Activated CD4-positive, alpha-beta memory T cell treated with anti-CD3 and anti-CD28 coated beads for 36 hours (primary cell): ENCODE measurements at regions of chr2 and their contacts with region 1.

Region 1: DNA sequence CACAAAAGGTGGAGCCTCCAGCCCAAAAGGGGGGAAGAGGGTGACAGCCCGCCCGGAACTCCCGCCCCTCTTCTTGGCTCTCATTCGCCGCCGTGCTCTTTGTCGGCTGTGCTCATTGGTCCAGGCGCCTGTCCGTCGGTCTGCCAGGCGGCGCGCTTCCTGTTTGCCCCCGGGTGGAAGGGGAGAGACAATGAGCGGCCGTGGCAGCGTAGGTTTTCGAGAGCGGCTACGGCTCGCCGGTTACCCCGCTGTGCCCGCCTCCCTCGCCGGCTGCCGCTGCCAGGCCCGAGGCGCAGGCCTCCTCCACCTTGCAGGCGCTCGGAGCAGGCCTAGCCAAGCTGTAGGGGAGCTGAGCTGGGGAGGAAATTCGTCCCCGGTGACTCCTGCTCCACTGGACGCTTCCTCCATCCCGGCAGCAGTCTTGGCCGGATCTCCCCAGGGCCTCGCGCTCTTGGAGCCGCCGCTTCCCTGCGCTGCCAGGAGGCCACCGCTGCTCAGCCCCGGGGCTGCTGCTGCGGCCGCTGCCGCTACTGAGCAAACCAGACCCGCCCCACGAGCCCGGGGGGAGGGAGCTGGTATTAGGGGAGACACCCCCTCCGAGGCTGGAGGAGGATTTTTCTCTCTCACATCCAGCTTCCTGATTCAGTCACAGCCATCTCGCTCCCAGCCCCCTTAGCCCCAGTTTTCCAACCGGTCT is at the start of gene SP3:
- DNase-seq: peak; percentile 98
- H3K4me3 Mint-ChIP-seq: peak within 1 kb of the TSS; percentile 86
- H3K27ac Mint-ChIP-seq: peak within 1 kb of the TSS; percentile 100
- H3K4me1 Mint-ChIP-seq: peaks cover 26% of the 10 kb centered on the region
- H3K27me3 Mint-ChIP-seq: no peaks in the 10 kb centered on the region
- total RNA-seq, gene SP3: 79.9 to 90.1 TPM

Region 2: GRCh38 chr2:173354601-173355131 is 610.8 kb before region 1 on chr2 and contains the start of gene CDCA7:
- CTCF ChIA-PET with region 1: no interaction called
- POLR2A ChIA-PET with region 1: no interaction called
- intact Hi-C with region 1: loop called (anchors 5 kb)
- DNase-seq: peak; percentile 78
- H3K4me3 Mint-ChIP-seq: peak within 1 kb of the TSS; percentile 84
- H3K27ac Mint-ChIP-seq: peak within 1 kb of the TSS; percentile 93
- H3K4me1 Mint-ChIP-seq: peaks cover 41% of the 10 kb centered on the region
- H3K27me3 Mint-ChIP-seq: peaks cover 47% of the 10 kb centered on the region
- total RNA-seq, gene CDCA7: 59.9 to 64.1 TPM

Region 3: DNA sequence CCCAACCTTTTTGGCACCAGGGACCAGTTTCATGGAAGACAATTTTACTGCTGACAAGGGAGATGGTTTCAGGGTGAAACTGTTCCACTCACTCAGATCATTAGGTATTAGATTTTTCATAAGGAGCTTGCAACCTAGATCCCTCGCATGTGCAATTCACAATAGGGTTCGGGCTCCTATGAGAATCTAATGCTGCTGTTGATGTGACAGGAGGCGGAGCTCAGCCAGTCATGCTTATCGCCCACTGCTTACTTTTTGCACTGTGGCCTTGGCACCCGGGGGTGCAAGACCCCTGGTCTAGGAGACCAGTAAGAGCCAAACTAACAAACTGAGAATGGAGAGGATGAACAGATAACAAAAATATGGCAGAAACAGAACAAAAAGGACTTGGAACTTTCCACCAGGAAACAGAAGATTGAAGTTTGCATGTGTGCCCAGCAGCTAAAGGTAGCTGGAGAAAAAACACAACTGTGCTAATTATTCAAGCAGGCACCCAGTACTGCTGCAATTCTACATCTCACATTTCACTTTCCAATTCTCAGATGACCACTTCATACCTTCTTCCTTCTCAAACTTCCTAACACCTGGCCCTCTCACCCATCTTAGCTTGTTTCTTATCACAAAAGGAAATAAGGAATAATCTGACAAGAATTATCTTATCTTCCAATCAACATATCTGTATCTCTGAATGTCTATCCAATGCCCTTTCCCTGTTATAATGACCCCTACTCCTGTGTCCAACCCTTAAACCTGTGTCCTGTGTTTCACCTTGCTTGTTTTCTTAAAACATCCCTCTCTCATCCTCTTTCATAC is 25.1 kb before region 1 on chr2:
- CTCF ChIA-PET with region 1: interaction called, 4 read pairs
- POLR2A ChIA-PET with region 1: interaction called, 4 read pairs
- intact Hi-C with region 1: loop called (anchors 2 kb)
- DNase-seq: no peak
- H3K4me3 Mint-ChIP-seq: no peak overlapping the region
- H3K27ac Mint-ChIP-seq: peak overlapping the region; percentile 24
- H3K4me1 Mint-ChIP-seq: peaks cover 70% of the 10 kb centered on the region
- H3K27me3 Mint-ChIP-seq: no peaks in the 10 kb centered on the region

Region 4: DNA sequence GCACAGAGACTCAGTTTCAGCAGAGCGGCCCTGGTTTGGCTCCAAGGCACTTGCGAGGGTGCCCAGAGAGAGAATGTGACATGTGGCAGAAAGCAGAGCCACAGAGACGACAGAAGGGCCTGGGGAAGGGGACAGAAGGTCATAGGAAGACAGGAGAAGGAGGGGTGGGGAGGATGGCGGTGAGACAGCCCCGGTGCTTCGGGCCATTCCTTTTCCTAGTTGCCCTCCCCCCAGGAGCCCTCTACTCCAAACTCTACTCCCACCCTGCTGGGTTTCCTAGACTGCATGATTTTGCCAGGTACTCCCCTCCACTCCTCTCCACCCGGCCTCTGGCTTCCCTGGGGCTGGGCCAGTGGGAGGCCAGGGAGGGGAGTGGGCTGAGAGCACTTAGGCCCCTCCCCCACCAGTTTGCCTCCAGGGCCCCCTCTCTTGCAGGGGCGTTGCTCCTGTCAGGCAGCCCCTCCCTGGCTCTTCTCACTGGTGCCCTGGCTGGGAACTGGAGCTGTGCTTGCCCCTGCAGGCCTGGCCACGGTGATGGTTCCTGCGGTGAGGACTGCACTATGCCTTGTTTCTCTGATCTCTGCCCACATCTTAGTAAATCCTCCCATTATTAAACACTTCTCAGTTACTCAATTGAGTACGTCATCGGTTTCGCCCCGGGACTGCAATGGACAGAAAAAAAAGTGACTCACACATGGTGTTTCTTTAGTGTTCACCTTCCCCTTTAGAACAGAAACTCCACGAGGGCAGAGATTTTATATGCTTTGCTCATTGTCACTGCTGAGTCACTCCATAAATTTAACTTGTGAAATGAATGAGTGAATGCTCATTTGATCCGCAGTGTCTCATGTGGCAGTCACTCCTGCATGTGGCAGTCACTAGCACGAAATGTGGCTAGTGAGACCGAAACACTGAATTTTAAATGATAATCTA is 58.4 kb after region 1 on chr2:
- CTCF ChIA-PET with region 1: no interaction called
- POLR2A ChIA-PET with region 1: no interaction called
- intact Hi-C with region 1: loop called (anchors 1 kb)
- DNase-seq: peak; percentile 69
- H3K4me3 Mint-ChIP-seq: no peak overlapping the region
- H3K27ac Mint-ChIP-seq: peak overlapping the region; percentile 5
- H3K4me1 Mint-ChIP-seq: peaks cover 8% of the 10 kb centered on the region
- H3K27me3 Mint-ChIP-seq: peaks cover 5% of the 10 kb centered on the region

Region 5: DNA sequence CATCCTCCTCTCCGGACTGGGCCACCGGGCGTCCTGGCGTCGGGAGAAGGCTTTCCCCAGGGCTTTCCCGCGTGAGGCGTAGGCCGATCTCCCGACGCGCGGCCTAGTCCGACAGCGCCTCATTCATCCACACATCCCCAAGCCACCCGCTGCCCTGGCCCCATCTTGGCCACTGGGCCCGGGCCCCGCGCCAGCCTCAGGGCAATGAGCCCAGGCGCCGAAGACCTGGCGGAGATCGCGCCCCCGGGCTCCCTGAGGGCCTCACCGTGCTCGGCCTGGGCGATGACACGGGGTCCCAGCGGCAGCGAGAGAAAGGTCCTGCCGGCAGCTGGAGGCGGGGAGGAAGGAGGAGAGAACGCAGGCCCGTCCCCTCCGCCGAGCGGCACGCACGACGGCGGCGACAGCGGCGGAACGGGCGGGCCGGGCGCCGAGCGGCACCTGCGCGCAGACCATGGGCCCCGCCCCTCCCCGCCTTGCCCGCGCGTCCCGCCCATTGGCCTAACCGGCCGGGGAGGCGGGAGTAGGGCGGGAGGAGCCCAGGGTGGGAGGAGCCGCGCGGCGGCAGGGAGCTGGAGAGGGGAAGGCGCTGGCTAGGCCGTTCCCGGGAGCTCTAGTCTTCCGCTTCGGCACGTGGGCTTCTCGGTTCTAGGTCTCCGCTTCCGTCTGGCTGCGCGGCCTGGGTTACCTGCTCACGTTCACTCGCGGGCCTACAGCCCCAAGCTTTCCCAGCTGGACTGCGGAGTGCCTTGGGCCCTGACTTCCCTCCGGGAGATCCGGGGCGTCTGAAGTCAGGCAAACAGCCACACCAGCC is 282.9 kb after region 1 on chr2 and contains the start of gene OLA1:
- CTCF ChIA-PET with region 1: no interaction called
- POLR2A ChIA-PET with region 1: interaction called, 3 read pairs
- intact Hi-C with region 1: loop called (anchors 1 kb)
- DNase-seq: peak; percentile 97
- H3K4me3 Mint-ChIP-seq: peak within 1 kb of the TSS; percentile 86
- H3K27ac Mint-ChIP-seq: peak within 1 kb of the TSS; percentile 77
- H3K4me1 Mint-ChIP-seq: peaks cover 24% of the 10 kb centered on the region
- H3K27me3 Mint-ChIP-seq: no peaks in the 10 kb centered on the region
- total RNA-seq, gene OLA1: 111 to 117 TPM

Region 6: GRCh38 chr2:174487108-174487819 is 521.8 kb after region 1 on chr2:
- CTCF ChIA-PET with region 1: no interaction called
- POLR2A ChIA-PET with region 1: no interaction called
- intact Hi-C with region 1: loop called (anchors 1 kb)
- DNase-seq: peak; percentile 100
- H3K4me3 Mint-ChIP-seq: peak overlapping the region; percentile 93
- H3K27ac Mint-ChIP-seq: peak overlapping the region; percentile 95
- H3K4me1 Mint-ChIP-seq: peaks cover 50% of the 10 kb centered on the region
- H3K27me3 Mint-ChIP-seq: no peaks in the 10 kb centered on the region